ENCODE measurements at regions of chr3 and their contacts with region 1.

Region 1: GRCh38 chr3:109071350-109072142 is 46.4 kb downstream of the MORC1 start:
- DNase-seq: peak in 2 of 3 donors; percentile 55 to 70
- H3K4me3 ChIP-seq: peak overlapping the region in 4 of 7 experiments; percentile 38 to 55 (median 42)
- H3K27ac ChIP-seq: no peak overlapping the region
- H3K4me1 ChIP-seq: peaks cover 19 to 37% (median 21%) of the 10 kb centered on the region in 4 experiments
- H3K27me3 ChIP-seq: no peaks in the 10 kb centered on the region

Region 2: GRCh38 chr3:109023656-109024254 is 47.8 kb before region 1 on chr3:
- CTCF ChIA-PET with region 1: interaction called, 15 read pairs
- POLR2A ChIA-PET with region 1: no interaction called
- DNase-seq: peak; percentile 59 to 80 (median 73)
- H3K4me3 ChIP-seq: no peak overlapping the region
- H3K27ac ChIP-seq: no peak overlapping the region
- H3K4me1 ChIP-seq: no peaks in the 10 kb centered on the region
- H3K27me3 ChIP-seq: no peaks in the 10 kb centered on the region

Region 3: DNA sequence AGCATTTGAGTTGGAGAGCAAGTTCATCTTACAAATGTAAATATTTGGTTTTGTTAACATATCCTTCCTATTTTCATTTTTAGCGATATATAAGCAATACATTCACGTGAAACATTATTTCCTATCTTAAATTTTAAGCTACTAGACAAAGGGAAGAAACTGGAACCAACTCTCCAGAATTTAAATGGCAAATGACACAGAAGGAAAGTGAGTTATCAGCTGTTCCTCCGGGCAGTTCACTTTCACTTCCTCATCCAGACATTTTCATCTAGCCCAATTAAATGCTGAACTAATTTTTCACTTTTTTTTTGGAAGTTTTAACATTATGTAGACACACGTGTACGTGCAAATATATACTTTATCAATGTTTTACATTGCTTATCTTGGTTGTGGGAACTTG is 12.3 kb before region 1 on chr3:
- CTCF ChIA-PET with region 1: interaction called, 12 read pairs
- POLR2A ChIA-PET with region 1: no interaction called
- DNase-seq: peak in 2 of 3 donors; percentile 36 to 54
- H3K4me3 ChIP-seq: peak overlapping the region in 1 of 7 experiments; percentile 31
- H3K27ac ChIP-seq: no peak overlapping the region
- H3K4me1 ChIP-seq: no peaks in the 10 kb centered on the region
- H3K27me3 ChIP-seq: no peaks in the 10 kb centered on the region

Region 4: GRCh38 chr3:109081746-109082510 is 10.4 kb after region 1 on chr3:
- CTCF ChIA-PET with region 1: interaction called, 26 read pairs
- POLR2A ChIA-PET with region 1: no interaction called
- DNase-seq: peak; percentile 73 to 93 (median 91)
- H3K4me3 ChIP-seq: no peak overlapping the region
- H3K27ac ChIP-seq: no peak overlapping the region
- H3K4me1 ChIP-seq: peaks cover 0 to 3% (median 0%) of the 10 kb centered on the region in 4 experiments
- H3K27me3 ChIP-seq: no peaks in the 10 kb centered on the region

Measured in common myeloid progenitor, CD34-positive (primary cell).